Transverse colon (tissue), 4 donors: ENCODE measurements at regions of chr2 and their contacts with region 1.

Region 1: DNA sequence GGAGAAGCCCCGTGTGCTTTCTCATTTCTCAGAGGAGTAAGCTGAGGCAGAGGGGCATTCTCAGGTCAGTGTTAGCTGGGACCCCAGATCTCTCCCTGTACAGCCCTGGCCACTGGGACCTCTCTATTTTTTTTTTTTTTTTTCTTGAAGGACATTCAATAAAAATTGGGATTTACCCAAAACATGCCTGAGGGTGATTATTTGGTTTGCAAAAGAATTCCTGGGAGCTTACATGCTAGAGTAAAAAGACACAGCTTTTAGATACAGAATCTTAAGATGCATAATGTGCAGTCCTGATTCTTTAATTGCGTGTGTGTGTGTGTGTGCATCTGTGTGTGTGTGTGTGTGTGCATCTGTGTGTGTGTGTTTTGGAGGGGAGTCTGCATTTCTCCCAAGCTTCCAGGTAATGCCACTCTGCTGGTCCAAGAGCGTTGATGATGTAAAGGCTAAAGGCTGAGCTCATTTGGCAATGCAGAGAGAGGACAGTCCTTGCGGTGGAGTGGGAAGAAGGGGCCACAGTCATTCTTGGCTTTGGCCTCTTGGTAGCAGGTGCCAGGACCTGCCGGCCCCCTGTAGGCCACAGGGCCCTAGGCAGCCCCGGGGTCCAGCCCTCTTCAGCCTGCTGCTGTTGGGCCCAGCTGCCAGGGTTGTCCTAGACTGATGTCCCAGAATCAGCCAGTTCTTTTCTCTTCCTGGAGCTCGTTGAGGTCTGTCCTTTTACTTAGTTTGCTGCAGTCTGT is 74.1 kb upstream of the MCFD2 start:
- DNase-seq: no peak
- H3K4me3 ChIP-seq: no peak overlapping the region
- H3K27ac ChIP-seq: peak overlapping the region; percentile 75 to 88 (median 86)
- H3K4me1 ChIP-seq: peaks cover 43 to 58% (median 48%) of the 10 kb centered on the region in 4 donors
- H3K27me3 ChIP-seq: no peaks in the 10 kb centered on the region
- CTCF ChIP-seq: no peak
- EP300 ChIP-seq: no peak
- POLR2A ChIP-seq: no peak

Region 2: GRCh38 chr2:47323009-47323821 is 333.6 kb after region 1 on chr2:
- in situ Hi-C with region 1: loop called in 1 of 4 experiments (anchors 10 kb)
- intact Hi-C with region 1: no loop called
- DNase-seq: peak; percentile 86
- H3K4me3 ChIP-seq: no peak overlapping the region
- H3K27ac ChIP-seq: peak overlapping the region in 3 of 4 donors; percentile 25 to 45 (median 38)
- H3K4me1 ChIP-seq: peaks cover 0 to 12% (median 8%) of the 10 kb centered on the region in 4 donors
- H3K27me3 ChIP-seq: no peaks in the 10 kb centered on the region
- CTCF ChIP-seq: peak; percentile 96 to 99 (median 97)
- EP300 ChIP-seq: no peak
- POLR2A ChIP-seq: no peak